Calu3 (cell line): ENCODE measurements at regions of chr17 and their contacts with region 1.

Region 1: GRCh38 chr17:40735016-40735415 is 20.1 kb downstream of the KRT25 start:
- DNase-seq: no peak
- H3K4me3 Mint-ChIP-seq: no peak overlapping the region
- H3K27ac Mint-ChIP-seq: no peak overlapping the region
- H3K4me1 Mint-ChIP-seq: no peaks in the 10 kb centered on the region
- H3K27me3 Mint-ChIP-seq: peaks cover 88% of the 10 kb centered on the region
- CTCF ChIP-seq: no peak

Region 2: DNA sequence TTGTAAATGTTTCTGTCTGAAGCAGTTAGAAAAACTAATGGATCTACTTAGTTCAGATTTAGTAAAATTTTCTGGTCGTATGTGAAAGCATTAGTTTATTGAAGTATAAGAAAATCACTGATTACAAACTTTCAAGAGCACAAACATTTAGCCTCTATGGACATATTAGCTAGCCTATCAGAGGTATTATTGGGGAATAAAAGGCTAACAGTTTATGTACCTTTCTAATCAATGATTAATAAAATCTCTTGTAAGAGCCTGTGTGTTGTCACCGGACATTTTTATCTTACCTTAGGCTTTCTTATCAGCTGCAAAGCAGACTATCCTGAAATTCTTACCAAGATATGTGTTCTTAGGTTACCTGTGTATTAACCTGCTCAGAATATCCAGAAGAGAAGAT is 845.8 kb before region 1 on chr17:
- CTCF ChIA-PET with region 1: no interaction called
- intact Hi-C with region 1: loop called (anchors 5 kb)
- DNase-seq: peak; percentile 82
- H3K4me3 Mint-ChIP-seq: no peak overlapping the region
- H3K27ac Mint-ChIP-seq: no peak overlapping the region
- H3K4me1 Mint-ChIP-seq: peaks cover 26% of the 10 kb centered on the region
- H3K27me3 Mint-ChIP-seq: peaks cover 22% of the 10 kb centered on the region
- CTCF ChIP-seq: no peak

Region 3: DNA sequence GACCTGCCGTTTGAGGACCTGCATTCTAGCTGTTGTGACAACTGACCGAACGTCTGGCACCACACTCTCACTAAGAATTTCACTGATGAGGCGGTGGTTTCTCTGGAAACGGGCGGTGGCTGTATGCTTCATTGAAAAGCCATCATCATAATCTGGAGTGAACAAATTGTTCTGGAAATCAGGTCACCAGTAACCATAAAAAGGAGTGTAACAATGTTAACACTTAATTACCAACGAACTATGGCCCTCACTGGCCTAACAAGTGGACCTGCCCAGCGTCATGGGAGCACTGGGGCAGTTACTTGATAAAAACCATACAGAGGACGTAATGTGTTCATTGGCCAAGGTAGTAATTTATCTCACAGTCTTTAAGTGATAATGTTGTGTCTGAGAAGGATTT is 102.8 kb before region 1 on chr17:
- CTCF ChIA-PET with region 1: no interaction called
- intact Hi-C with region 1: no loop called
- DNase-seq: peak; percentile 4
- H3K4me3 Mint-ChIP-seq: no peak overlapping the region
- H3K27ac Mint-ChIP-seq: no peak overlapping the region
- H3K4me1 Mint-ChIP-seq: no peaks in the 10 kb centered on the region
- H3K27me3 Mint-ChIP-seq: no peaks in the 10 kb centered on the region
- CTCF ChIP-seq: no peak

Region 4: GRCh38 chr17:40707720-40708119 is 27.3 kb before region 1 on chr17:
- CTCF ChIA-PET with region 1: interaction called, 10 read pairs
- intact Hi-C with region 1: no loop called
- DNase-seq: peak; percentile 92
- H3K4me3 Mint-ChIP-seq: no peak overlapping the region
- H3K27ac Mint-ChIP-seq: peak overlapping the region; percentile 14
- H3K4me1 Mint-ChIP-seq: peaks cover 36% of the 10 kb centered on the region
- H3K27me3 Mint-ChIP-seq: peaks cover 14% of the 10 kb centered on the region
- CTCF ChIP-seq: no peak

Region 5: GRCh38 chr17:40714473-40714872 is 20.5 kb before region 1 on chr17:
- CTCF ChIA-PET with region 1: interaction called, 15 read pairs
- intact Hi-C with region 1: no loop called
- DNase-seq: no peak
- H3K4me3 Mint-ChIP-seq: no peak overlapping the region
- H3K27ac Mint-ChIP-seq: no peak overlapping the region
- H3K4me1 Mint-ChIP-seq: no peaks in the 10 kb centered on the region
- H3K27me3 Mint-ChIP-seq: peaks cover 60% of the 10 kb centered on the region
- CTCF ChIP-seq: peak; percentile 66

Region 6: DNA sequence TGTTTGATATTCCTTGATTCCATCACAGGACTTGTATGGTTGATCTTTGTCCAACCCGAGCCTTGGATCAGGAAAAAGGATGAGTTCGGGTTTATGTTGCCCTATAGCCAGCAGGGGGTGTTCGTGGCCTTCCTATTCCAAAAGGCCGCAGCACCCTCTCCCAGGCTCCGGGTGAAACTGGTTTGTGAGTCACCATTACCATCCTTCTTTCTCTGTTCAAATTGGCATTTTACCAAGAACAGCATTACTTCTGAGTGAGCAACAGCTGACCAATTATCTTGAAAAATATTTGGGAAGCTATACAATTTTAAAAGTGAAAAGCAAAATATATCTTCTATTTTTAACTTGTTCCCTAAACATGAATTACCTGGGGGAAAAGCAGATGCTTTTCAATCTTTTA is 174.3 kb after region 1 on chr17:
- CTCF ChIA-PET with region 1: no interaction called
- intact Hi-C with region 1: no loop called
- DNase-seq: peak; percentile 99
- H3K4me3 Mint-ChIP-seq: no peak overlapping the region
- H3K27ac Mint-ChIP-seq: peak overlapping the region; percentile 86
- H3K4me1 Mint-ChIP-seq: peaks cover 94% of the 10 kb centered on the region
- H3K27me3 Mint-ChIP-seq: no peaks in the 10 kb centered on the region
- CTCF ChIP-seq: peak; percentile 98

Region 7: DNA sequence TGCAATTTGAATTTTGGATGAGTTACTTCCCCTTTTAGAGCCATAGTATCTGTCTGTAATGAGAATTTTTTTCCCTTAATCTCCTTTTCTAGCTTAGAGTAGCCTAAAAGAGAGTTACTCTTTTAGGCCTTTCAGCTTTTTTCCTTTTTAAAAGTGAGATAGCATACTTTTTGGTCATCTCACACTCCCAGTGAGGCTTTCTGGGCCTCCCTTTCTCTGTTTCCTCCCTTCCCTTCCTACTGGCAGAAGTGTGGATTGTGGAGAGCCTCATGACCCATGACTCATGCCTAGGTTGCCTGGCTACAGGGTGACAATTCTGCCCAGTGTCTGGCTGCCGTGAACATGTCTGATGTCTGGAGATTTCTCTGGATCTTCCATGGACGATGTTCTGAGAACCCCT is 187.2 kb after region 1 on chr17:
- CTCF ChIA-PET with region 1: no interaction called
- intact Hi-C with region 1: no loop called
- DNase-seq: peak; percentile 93
- H3K4me3 Mint-ChIP-seq: peak overlapping the region; percentile 26
- H3K27ac Mint-ChIP-seq: peak overlapping the region; percentile 96
- H3K4me1 Mint-ChIP-seq: peaks cover 69% of the 10 kb centered on the region
- H3K27me3 Mint-ChIP-seq: no peaks in the 10 kb centered on the region
- CTCF ChIP-seq: no peak